ENCODE measurements at regions of chr7 and their contacts with region 1.

Region 1: GRCh38 chr7:150988230-150989226 is 2.3 kb upstream of the NOS3 start:
- DNase-seq: peak; percentile 67 to 82 (median 78)
- H3K4me3 ChIP-seq: no peak overlapping the region
- H3K27ac ChIP-seq: no peak overlapping the region
- H3K4me1 ChIP-seq: peaks cover 0 to 23% (median 15%) of the 10 kb centered on the region in 4 experiments
- H3K27me3 ChIP-seq: peaks cover 0 to 22% (median 9%) of the 10 kb centered on the region in 5 experiments

Region 2: DNA sequence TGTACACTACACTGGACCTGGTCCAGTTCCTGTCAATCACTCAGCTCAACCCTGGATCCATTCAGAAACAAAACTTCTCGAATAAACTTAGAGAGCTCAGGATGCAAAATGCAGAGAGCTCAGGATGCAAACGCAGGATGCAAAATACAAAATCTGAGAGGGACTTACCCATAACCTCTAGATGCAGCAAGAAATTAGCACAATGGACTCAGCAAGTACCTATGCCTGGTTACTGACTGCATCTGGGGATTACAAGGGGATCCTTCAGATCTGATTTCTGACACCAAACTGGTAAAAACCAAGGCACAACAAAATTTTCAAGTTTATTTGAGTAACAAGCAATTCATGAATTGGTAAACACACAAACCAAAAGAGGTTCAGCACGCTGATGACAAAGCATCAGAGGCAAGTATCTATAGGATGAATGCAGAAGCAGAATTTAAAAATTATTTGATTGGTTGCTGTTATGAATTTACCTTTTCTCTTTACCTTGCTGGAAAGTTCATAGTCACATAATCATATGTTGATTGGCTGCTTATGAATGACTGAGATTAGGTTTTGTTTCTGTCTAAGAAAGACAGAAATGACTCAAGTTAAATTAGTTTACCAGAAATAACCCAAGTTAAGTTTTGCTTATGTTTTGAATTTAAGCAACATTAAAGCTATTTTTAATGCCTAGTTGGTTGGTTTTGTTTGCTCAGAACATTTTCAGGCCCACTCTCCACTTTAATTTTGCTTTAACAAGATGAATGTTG is 367.7 kb before region 1 on chr7:
- CTCF ChIA-PET with region 1: no interaction called
- POLR2A ChIA-PET with region 1: no interaction called
- DNase-seq: no peak
- H3K4me3 ChIP-seq: no peak overlapping the region
- H3K27ac ChIP-seq: no peak overlapping the region
- H3K4me1 ChIP-seq: no peaks in the 10 kb centered on the region
- H3K27me3 ChIP-seq: no peaks in the 10 kb centered on the region

Region 3: DNA sequence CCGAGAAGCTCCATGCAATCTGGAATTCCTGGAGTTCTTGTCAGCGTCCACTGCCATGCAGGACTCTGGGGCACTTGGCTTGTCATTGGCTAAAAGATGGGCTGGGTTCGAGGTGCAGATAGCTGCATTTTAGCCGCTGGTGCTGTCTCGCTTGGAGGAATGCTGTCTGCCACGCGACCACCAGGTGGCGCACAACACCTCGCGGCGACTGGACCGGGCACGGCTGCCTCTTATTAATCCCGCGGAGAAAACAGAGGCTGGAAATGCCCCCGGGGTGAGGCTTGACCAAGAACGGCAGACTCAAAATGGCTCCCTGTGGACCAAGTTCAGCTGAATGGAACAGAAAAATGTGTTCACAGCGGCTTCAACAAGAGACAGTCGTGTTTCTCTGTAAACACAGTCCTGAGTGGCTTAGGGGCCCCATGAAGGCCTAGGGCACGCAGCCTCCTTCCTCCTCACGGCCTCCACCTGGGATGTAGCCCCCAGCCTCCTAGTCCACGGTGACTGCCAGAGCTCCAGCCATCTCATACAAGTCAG is 90.0 kb before region 1 on chr7:
- CTCF ChIA-PET with region 1: interaction called, 15 read pairs
- POLR2A ChIA-PET with region 1: no interaction called
- DNase-seq: peak; percentile 60 to 68 (median 64)
- H3K4me3 ChIP-seq: no peak overlapping the region
- H3K27ac ChIP-seq: no peak overlapping the region
- H3K4me1 ChIP-seq: peaks cover 0 to 21% (median 11%) of the 10 kb centered on the region in 4 experiments
- H3K27me3 ChIP-seq: peaks cover 0 to 35% (median 19%) of the 10 kb centered on the region in 5 experiments

Region 4: DNA sequence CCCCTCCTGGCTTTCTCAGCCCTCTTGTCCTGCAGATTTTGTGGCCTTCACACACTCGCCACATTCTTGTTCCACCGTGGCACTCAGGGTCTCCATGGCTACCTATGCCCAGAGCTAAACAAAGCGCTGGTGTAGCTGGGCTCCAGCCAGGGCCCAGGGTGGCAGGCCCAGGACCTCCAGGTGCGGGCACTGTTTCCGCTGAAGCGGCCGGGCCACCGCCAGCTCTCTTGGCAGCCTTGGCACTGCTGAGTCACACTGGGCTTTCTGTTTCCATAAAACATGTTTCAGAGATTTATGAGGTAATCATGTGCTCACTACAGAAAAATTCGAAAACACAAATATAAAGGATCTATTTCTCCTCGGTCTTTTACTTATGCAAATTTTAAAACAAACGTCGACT is 84.9 kb before region 1 on chr7:
- CTCF ChIA-PET with region 1: interaction called, 15 read pairs
- POLR2A ChIA-PET with region 1: no interaction called
- DNase-seq: peak; percentile 89 to 98 (median 97)
- H3K4me3 ChIP-seq: peak overlapping the region in 3 of 7 experiments; percentile 13 to 31 (median 19)
- H3K27ac ChIP-seq: peak overlapping the region in 1 of 2 experiments; percentile 63
- H3K4me1 ChIP-seq: peaks cover 0 to 37% (median 20%) of the 10 kb centered on the region in 4 experiments
- H3K27me3 ChIP-seq: peaks cover 0 to 7% (median 6%) of the 10 kb centered on the region in 5 experiments

Region 5: GRCh38 chr7:150974468-150975391 is 13.8 kb before region 1 on chr7:
- CTCF ChIA-PET with region 1: interaction called, 215 read pairs
- POLR2A ChIA-PET with region 1: no interaction called
- DNase-seq: peak in 2 of 3 donors; percentile 78 to 83
- H3K4me3 ChIP-seq: peak overlapping the region; percentile 11 to 72 (median 60)
- H3K27ac ChIP-seq: peak overlapping the region in 1 of 2 experiments; percentile 4
- H3K4me1 ChIP-seq: peaks cover 0 to 38% (median 28%) of the 10 kb centered on the region in 4 experiments
- H3K27me3 ChIP-seq: peaks cover 0 to 78% (median 40%) of the 10 kb centered on the region in 5 experiments

Region 6: GRCh38 chr7:151008511-151009323 is 20.2 kb after region 1 on chr7:
- CTCF ChIA-PET with region 1: interaction called, 101 read pairs
- POLR2A ChIA-PET with region 1: no interaction called
- DNase-seq: peak in 2 of 3 donors; percentile 65 to 69
- H3K4me3 ChIP-seq: peak overlapping the region in 2 of 7 experiments; percentile 3 to 14
- H3K27ac ChIP-seq: peak overlapping the region in 1 of 2 experiments; percentile 44
- H3K4me1 ChIP-seq: peaks cover 0 to 36% (median 30%) of the 10 kb centered on the region in 4 experiments
- H3K27me3 ChIP-seq: peaks cover 0 to 38% (median 4%) of the 10 kb centered on the region in 5 experiments

Region 7: DNA sequence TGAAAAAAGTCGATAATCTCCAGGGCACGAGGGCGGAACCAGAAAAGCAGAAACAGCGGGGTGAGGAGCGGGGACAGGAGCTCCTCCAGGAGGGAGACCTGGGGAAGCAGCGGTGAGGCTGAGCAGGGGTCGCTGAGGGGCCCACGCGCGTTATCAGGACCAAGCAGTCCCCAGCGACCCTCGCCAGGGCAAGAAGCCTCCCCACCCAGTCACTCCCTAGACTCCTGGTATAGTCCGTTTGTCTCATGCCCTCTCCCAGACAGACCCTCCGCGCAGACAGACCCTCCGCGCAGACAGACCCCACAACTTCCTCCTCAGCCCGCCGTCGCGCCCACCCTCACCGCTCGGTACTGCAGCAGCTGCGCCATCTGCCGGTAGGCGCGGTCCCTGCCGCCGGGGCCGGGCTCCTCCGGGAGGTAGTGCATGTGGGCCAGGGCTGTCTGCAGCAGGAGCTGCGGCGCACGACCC is 29.5 kb after region 1 on chr7:
- CTCF ChIA-PET with region 1: interaction called, 101 read pairs
- POLR2A ChIA-PET with region 1: no interaction called
- DNase-seq: peak; percentile 70 to 87 (median 86)
- H3K4me3 ChIP-seq: peak overlapping the region in 6 of 7 experiments; percentile 14 to 66 (median 46)
- H3K27ac ChIP-seq: peak overlapping the region in 1 of 2 experiments; percentile 61
- H3K4me1 ChIP-seq: peaks cover 0 to 40% (median 31%) of the 10 kb centered on the region in 4 experiments
- H3K27me3 ChIP-seq: peaks cover 5 to 40% (median 13%) of the 10 kb centered on the region in 5 experiments

Measured in common myeloid progenitor, CD34-positive (primary cell).